ENCODE measurements at regions of chr22 and their contacts with region 1.

Region 1: DNA sequence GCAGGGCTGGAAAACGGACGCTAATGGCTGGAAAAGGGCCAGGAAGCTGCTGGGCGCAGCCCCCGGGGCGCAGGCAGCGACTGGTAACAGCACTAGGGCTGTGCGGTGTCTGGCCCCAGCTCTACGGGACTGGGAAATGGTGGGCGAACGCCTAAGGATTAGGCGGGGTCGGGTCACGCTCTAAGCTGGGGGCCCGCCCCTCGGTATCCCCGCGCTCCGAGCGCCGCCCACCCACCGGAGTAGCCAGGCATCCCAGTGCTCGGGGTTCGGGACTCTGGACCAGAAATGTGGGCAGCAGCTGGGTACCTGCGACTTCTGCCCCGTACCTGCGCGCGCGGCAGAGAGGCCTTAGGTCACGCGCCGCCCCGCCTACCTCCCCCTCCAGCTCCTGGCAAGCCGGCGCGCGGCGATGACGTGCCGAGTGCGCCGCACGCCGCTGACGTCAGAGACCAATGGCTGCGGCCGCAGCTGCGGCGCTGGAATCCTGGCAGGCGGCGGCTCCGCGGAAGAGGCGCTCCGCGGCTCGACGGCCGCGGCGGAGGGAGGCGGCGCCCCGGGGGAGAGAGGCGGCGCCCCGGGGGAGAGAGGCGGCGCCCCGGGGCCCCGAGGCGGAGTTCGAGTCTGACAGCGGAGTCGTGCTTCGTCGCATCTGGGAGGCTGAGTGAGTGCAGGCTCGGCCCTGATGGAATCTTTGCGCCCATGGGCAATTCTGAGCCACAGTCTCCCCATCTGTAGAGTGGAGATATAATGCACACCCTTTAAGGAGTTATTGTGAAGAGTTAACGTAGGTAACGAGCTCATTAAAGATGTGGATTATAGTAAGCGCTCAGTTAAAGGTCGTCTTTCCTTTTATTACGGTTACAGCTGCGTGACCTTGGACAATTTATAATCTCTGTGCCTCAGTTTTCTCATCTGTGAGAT is at the starts of genes HPS4 and SRRD:
- DNase-seq: peak; percentile 91 to 96 (median 94)
- H3K4me3 ChIP-seq: peak within 1 kb of the TSS; percentile 51 to 92
- H3K4me3 Mint-ChIP-seq: peak within 1 kb of the TSS; percentile 91 to 98 (median 92)
- H3K27ac ChIP-seq: peak within 1 kb of the TSS; percentile 95
- H3K27ac Mint-ChIP-seq: peak within 1 kb of the TSS; percentile 93 to 99 (median 99)
- H3K4me1 ChIP-seq: peaks cover 70% of the 10 kb centered on the region
- H3K4me1 Mint-ChIP-seq: peaks cover 50 to 79% (median 66%) of the 10 kb centered on the region in 4 donors
- H3K27me3 ChIP-seq: no peaks in the 10 kb centered on the region
- H3K27me3 Mint-ChIP-seq: no peaks in the 10 kb centered on the region
- total RNA-seq, gene HPS4: 54.0 to 59.7 TPM
- total RNA-seq, gene SRRD: 19.5 to 20.7 TPM

Region 2: GRCh38 chr22:26428515-26429457 is 54.9 kb before region 1 on chr22 and contains the start of gene ASPHD2:
- CTCF ChIA-PET with region 1: no interaction called
- POLR2A ChIA-PET with region 1: interaction called, 46 read pairs
- intact Hi-C with region 1: loop called (anchors 2 kb)
- DNase-seq: peak; percentile 81 to 86 (median 83)
- H3K4me3 ChIP-seq: peak within 1 kb of the TSS; percentile 64 to 87
- H3K4me3 Mint-ChIP-seq: peak within 1 kb of the TSS; percentile 94 to 100 (median 98)
- H3K27ac ChIP-seq: peak within 1 kb of the TSS; percentile 89
- H3K27ac Mint-ChIP-seq: peak within 1 kb of the TSS; percentile 87 to 100 (median 99)
- H3K4me1 ChIP-seq: peaks cover 25% of the 10 kb centered on the region
- H3K4me1 Mint-ChIP-seq: peaks cover 18 to 37% (median 26%) of the 10 kb centered on the region in 4 donors
- H3K27me3 ChIP-seq: no peaks in the 10 kb centered on the region
- H3K27me3 Mint-ChIP-seq: peaks cover 0 to 2% of the 10 kb centered on the region in 2 donors
- total RNA-seq, gene ASPHD2: 4.0 to 4.1 TPM

Region 3: DNA sequence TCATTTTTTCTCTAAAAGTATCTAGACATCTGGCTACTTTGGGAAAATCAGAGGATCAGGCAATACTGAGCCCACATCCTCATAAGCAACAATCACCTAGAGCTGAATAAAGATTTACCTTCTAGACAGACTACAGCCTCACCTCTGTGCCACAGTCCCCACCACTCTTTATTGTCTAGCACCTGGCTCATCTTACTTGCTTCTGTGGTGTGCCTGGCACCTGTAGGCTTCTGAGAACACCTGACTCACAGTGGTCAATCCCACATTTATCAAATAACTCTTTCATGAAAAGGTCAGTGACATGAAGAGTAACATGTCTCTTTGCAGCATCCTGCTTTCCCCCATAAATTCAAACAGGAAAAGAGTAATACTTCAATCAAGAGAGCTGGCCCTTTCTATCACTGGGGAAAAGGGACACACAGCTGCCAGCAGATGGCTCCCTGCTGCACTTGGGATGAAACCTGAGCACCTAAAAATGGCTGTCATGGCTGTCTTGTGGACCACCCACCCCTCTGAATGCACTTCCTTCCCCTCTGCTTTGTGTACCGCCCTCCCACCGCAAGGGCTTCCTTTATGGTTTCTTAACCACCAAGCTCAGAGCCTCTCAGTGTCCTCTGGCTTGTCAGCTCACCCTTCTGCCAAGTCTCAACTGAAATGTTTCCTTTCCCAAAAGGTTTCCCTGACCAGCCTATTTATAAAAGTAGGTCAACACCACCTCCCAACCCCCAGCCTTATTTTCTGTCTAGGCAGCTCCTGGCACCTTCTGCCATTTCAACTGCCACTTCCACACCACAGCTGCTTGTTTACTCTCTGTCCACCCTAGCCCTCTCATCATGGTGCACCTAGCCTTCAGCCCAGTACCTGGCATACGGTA is 19.2 kb after region 1 on chr22:
- CTCF ChIA-PET with region 1: interaction called, 8 read pairs
- POLR2A ChIA-PET with region 1: interaction called, 40 read pairs
- intact Hi-C with region 1: no loop called
- DNase-seq: peak; percentile 57 to 69 (median 65)
- H3K4me3 ChIP-seq: no peak overlapping the region
- H3K4me3 Mint-ChIP-seq: peak overlapping the region in 7 of 8 donors; percentile 13 to 76 (median 49)
- H3K27ac ChIP-seq: no peak overlapping the region
- H3K27ac Mint-ChIP-seq: peak overlapping the region; percentile 57 to 93 (median 79)
- H3K4me1 ChIP-seq: peaks cover 22% of the 10 kb centered on the region
- H3K4me1 Mint-ChIP-seq: peaks cover 17 to 27% (median 23%) of the 10 kb centered on the region in 4 donors
- H3K27me3 ChIP-seq: no peaks in the 10 kb centered on the region
- H3K27me3 Mint-ChIP-seq: no peaks in the 10 kb centered on the region

Region 4: DNA sequence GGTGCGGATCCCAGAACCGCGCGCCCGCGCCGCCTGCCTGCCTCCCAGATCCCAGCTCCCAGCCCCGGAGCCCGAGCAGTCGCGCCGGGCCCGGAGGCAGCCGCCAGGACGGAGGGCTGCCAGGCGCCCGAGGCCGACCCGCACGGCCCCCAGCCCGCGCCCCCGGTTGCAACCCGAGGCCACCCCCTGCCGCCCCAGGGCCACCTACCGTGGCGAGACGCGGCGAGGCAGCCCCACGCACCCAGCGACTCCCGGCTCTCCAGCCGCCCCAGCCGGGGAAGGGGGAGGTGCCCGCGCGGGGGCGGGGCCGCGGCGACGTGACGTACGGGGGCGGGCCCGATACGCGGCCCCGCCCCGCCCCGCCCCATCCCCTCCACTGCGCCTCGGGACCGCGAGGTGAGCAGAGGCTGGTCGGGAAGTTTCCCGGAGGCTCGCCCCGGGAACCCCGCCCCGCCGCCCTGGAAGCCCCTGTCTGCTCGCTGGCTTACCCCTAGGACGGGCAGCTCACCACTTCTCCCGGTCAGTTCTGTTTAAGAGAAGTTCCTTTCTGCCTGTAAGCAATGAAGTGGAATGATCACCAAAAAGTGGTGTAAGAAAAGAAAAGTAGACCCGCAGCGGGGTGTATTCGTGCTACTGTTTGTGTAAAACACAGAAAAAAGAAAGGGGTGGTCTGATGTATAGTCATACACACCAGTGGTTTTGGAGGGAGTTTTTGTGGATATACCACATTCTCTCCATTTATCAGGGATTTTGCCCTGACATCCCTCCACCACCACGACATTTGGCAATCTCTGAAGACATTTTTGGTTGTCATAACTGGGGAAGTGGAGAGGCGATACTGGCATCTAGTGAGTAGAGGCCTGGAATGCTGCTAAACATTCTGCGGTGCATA is 106.4 kb after region 1 on chr22 and contains the start of gene TPST2:
- CTCF ChIA-PET with region 1: no interaction called
- POLR2A ChIA-PET with region 1: interaction called, 12 read pairs
- intact Hi-C with region 1: loop called (anchors 1 kb)
- DNase-seq: peak; percentile 73 to 82 (median 76)
- H3K4me3 ChIP-seq: peak within 1 kb of the TSS; percentile 78 to 95
- H3K4me3 Mint-ChIP-seq: peak within 1 kb of the TSS; percentile 90 to 98 (median 94)
- H3K27ac ChIP-seq: peak within 1 kb of the TSS; percentile 66
- H3K27ac Mint-ChIP-seq: peak within 1 kb of the TSS; percentile 91 to 98 (median 96)
- H3K4me1 ChIP-seq: peaks cover 81% of the 10 kb centered on the region
- H3K4me1 Mint-ChIP-seq: peaks cover 41 to 85% (median 61%) of the 10 kb centered on the region in 4 donors
- H3K27me3 ChIP-seq: no peaks in the 10 kb centered on the region
- H3K27me3 Mint-ChIP-seq: no peaks in the 10 kb centered on the region
- total RNA-seq, gene TPST2: 23.9 to 27.9 TPM

Region 5: DNA sequence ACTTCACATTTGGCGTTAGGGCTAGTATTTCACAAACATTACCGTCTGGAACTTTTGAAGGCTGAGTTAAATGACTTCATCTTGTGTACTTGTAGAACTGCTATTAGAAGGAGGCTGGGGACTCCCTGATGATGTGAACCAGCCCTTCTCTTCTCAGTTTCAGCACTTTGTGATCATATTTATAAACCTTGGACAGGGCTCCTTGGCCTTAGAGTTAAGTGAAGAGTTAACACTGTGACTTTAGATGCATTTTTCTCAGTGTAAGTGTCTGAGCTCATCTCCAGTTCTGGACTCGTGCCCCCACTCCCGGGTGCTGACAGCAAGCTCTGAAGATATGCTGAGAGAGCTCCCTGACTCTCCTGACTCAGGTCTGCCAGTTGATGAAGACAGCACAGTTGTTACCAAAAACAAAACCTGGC is 182.1 kb after region 1 on chr22:
- CTCF ChIA-PET with region 1: interaction called, 7 read pairs
- POLR2A ChIA-PET with region 1: interaction called, 65 read pairs
- intact Hi-C with region 1: no loop called
- DNase-seq: no peak
- H3K4me3 ChIP-seq: no peak overlapping the region
- H3K4me3 Mint-ChIP-seq: peak overlapping the region in 1 of 8 donors; percentile 83
- H3K27ac ChIP-seq: peak overlapping the region; percentile 58
- H3K27ac Mint-ChIP-seq: peak overlapping the region; percentile 65 to 93 (median 88)
- H3K4me1 ChIP-seq: peaks cover 46% of the 10 kb centered on the region
- H3K4me1 Mint-ChIP-seq: peaks cover 29 to 57% (median 42%) of the 10 kb centered on the region in 4 donors
- H3K27me3 ChIP-seq: no peaks in the 10 kb centered on the region
- H3K27me3 Mint-ChIP-seq: no peaks in the 10 kb centered on the region